ENCODE measurements at regions of chr12 and their contacts with region 1.

Region 1: GRCh38 chr12:12356886-12357718 is at the start of gene BORCS5:
- DNase-seq: peak; percentile 98
- H3K4me3 Mint-ChIP-seq: peak within 1 kb of the TSS; percentile 97
- H3K27ac Mint-ChIP-seq: peak within 1 kb of the TSS; percentile 96
- H3K4me1 Mint-ChIP-seq: peaks cover 48% of the 10 kb centered on the region
- H3K27me3 Mint-ChIP-seq: no peaks in the 10 kb centered on the region
- total RNA-seq, gene BORCS5: 34.5 and 39.6 TPM in 2 replicates

Region 2: GRCh38 chr12:11171145-11171968 is 1185.7 kb before region 1 on chr12 and contains the start of gene SMIM10L1:
- intact Hi-C with region 1: loop called (anchors 10 kb)
- DNase-seq: peak; percentile 86
- H3K4me3 Mint-ChIP-seq: peak within 1 kb of the TSS; percentile 99
- H3K27ac Mint-ChIP-seq: peak within 1 kb of the TSS; percentile 100
- H3K4me1 Mint-ChIP-seq: peaks cover 58% of the 10 kb centered on the region
- H3K27me3 Mint-ChIP-seq: no peaks in the 10 kb centered on the region
- total RNA-seq, gene SMIM10L1: 10.4 and 11.3 TPM in 2 replicates

Region 3: DNA sequence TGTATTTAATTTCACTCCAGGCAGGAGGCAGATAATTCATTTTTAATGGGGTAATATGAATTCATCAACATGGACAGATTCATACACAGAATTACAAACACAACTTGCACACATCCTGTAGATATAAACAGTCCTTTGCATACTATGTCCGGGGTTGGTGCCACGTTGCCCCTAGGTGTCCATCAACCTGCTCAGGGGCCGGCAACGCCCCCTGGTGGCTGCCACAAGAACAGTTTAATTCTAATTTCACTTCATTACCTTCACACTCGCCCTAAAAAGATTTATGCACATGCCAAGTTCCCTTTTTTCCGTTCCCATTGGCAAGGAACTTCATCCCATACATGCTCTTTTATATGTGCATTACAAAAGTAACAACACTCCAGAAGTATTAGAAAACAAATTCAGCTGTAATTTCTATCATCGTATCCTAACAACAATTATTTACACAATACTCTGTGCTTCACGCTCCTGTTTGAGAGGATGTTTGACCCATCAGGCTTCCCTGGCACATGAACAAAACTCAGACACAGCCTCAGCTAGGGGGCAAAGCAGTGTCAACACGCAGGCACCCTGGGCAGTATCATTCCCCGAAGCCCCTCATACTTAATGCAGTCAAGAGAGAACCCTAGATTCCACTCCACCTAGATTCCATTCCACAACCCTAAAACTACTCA is 22.6 kb before region 1 on chr12:
- intact Hi-C with region 1: loop called (anchors 1 kb)
- DNase-seq: peak; percentile 38
- H3K4me3 Mint-ChIP-seq: no peak overlapping the region
- H3K27ac Mint-ChIP-seq: no peak overlapping the region
- H3K4me1 Mint-ChIP-seq: peaks cover 44% of the 10 kb centered on the region
- H3K27me3 Mint-ChIP-seq: no peaks in the 10 kb centered on the region

Region 4: DNA sequence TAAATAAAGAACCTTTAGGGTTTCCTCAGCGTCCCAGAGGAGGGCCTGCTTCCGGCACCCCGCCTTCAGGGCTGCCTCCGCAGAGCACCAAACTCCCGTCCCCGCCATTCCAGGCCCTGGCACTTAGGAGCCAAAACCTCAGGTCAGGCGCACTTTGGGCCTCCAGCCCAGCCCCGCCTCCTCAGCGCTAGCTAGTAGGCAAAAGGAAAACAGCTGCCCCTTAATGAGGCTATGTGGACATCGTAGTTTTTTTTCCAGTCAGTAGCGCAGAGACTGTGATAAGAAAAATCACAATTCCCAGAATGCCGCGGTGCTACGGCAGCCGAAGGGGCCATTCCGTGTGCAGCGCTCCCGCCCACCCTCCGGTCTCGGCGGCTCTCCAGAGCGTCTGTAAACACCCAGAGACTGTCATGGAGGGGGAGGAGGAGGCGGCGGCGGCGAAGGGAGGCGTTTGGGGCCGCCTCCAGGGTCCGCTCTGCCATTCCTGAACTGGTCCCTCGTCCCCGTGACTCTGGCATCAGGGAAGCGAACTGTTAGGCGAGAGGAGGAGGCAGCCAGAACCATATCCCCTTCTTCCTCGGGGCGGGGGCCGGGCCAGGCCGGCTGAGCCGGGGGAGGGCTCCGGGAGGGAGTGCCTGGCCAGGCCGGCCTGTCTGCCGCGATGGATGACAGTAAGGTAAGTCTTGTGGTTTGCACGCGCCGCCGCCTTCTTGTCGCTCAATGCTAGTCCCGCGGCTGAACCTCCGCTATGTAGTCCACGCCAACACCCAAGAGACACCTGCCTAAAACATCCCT is 254.6 kb after region 1 on chr12 and contains the start of gene CREBL2:
- intact Hi-C with region 1: loop called (anchors 1 kb)
- DNase-seq: peak; percentile 78
- H3K4me3 Mint-ChIP-seq: peak within 1 kb of the TSS; percentile 95
- H3K27ac Mint-ChIP-seq: peak within 1 kb of the TSS; percentile 96
- H3K4me1 Mint-ChIP-seq: peaks cover 47% of the 10 kb centered on the region
- H3K27me3 Mint-ChIP-seq: no peaks in the 10 kb centered on the region
- total RNA-seq, gene CREBL2: 16.7 and 17.9 TPM in 2 replicates

Region 5: DNA sequence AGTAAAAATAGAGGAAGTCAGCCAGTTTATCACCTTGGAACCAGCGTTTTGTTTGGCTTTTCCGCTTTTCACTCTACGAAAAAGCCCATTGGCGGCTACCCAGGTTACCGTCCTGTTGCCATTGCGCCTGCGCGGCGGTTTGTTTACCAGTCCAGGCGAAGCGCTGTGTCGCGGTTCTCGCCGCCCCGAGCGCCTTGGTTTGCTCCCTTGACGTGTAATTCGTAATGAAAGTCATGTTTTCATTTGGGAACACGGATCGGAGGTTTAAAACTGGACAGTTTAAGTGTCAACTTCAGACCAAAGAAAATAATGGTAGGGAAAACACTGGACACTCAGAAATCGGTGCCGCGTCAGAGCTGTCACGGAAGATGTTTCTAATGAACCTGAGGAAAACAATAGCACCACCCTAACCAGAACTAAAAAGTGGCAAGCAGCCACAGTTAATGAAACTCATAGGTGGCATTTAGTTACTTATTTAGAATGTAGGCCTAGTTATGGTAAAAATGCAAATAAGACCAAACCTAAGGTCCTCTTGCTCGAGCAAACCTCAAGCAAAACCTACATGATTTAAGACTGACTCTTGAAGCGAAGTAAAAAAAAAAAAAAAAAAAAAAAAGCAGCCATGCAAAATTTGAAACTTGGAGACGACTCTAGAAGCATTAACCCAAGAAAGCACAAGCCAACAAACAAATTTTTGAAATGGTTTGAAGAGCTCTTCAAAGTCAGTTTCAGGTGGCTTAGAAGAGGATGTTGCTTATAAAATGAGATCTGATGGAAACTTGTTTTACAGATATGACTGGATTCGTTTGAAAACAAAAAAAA is 339.7 kb after region 1 on chr12:
- intact Hi-C with region 1: loop called (anchors 1 kb)
- DNase-seq: peak; percentile 91
- H3K4me3 Mint-ChIP-seq: peak overlapping the region; percentile 96
- H3K27ac Mint-ChIP-seq: peak overlapping the region; percentile 89
- H3K4me1 Mint-ChIP-seq: peaks cover 49% of the 10 kb centered on the region
- H3K27me3 Mint-ChIP-seq: no peaks in the 10 kb centered on the region

Region 6: DNA sequence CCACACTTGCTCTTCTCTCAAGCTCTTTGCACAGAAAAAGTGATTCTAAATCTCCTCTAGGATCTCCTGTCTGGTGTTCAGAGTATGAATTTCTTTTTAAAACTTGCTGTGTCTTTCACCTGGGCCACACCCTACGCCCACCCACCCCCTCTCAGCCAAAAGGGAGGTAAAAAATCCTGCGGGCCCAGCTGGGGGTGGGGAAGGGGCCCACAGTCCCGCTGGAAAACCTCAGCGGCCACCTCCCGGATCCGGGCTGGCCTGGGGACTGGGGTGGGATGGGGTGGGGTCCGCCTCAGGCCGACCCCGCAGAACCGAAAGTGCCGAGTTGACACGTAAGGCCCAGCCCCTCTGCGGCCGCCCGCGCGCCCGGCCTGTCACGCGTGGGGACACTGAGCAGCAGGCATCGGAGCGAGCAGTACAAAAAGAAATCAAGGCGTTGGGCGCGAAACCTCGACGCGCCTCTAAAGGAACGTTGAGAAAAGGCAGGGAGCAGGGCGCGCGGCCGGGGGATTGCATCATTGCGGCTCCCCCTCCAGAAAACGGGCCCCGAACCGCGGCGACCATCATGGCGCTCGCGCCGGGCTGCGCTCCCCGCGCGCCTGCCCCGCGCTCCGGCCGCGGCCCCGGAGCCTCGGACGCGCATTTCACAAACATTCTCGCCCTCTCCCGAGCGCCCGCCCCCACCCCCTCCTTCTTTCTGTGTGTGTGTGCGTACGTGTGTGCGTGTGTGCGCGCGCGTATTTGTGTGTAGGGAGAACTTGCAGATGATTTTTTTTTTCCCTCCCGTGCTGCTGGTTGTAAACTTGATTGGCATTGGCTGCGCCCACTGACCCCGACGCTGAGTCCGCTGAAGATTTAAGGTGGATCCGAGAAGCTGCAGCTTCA is 367.8 kb after region 1 on chr12:
- intact Hi-C with region 1: loop called (anchors 1 kb)
- DNase-seq: peak; percentile 88
- H3K4me3 Mint-ChIP-seq: peak overlapping the region; percentile 90
- H3K27ac Mint-ChIP-seq: peak overlapping the region; percentile 96
- H3K4me1 Mint-ChIP-seq: peaks cover 56% of the 10 kb centered on the region
- H3K27me3 Mint-ChIP-seq: peaks cover 3% of the 10 kb centered on the region

Region 7: GRCh38 chr12:12813120-12814101 is 456.3 kb after region 1 on chr12 and contains the start of gene DDX47:
- intact Hi-C with region 1: loop called (anchors 2 kb)
- DNase-seq: peak; percentile 94
- H3K4me3 Mint-ChIP-seq: peak within 1 kb of the TSS; percentile 85
- H3K27ac Mint-ChIP-seq: peak within 1 kb of the TSS; percentile 81
- H3K4me1 Mint-ChIP-seq: peaks cover 52% of the 10 kb centered on the region
- H3K27me3 Mint-ChIP-seq: no peaks in the 10 kb centered on the region
- total RNA-seq, gene DDX47: 120 and 127 TPM in 2 replicates

Region 8: DNA sequence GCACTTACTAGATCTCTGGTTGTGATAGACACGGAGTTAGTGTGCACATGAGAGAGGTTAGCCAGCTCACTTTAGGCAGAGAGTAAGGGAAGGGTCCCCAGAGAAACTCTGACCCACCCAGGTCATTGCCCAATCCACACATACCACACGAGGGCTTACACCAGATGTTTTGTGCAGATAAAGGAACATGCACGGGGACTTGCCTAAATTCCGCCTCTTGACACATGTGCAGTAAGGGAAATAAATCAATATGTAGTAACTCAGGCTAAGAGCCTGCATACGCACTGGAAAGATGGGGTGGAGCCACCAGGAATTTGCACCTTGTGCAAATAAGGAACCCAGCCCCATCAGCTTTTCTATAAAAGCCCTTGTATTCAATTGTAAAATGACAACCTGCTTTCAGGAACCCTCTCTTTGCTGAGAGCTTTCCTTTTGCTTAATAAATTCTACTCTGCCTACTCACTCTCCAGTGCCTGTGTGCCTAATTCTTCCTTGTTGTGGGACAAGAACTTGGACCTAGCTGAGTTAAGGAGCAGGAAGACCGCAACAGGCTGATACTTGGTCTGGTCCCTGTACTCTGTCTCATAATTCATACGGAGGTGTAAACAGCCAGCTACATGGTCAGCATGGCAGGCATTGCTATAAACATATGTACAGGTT is 959.6 kb after region 1 on chr12:
- intact Hi-C with region 1: no loop called
- DNase-seq: no peak
- H3K4me3 Mint-ChIP-seq: no peak overlapping the region
- H3K27ac Mint-ChIP-seq: no peak overlapping the region
- H3K4me1 Mint-ChIP-seq: no peaks in the 10 kb centered on the region
- H3K27me3 Mint-ChIP-seq: peaks cover 5% of the 10 kb centered on the region